ENCODE measurements at regions of chr14 and their contacts with region 1.

Region 1: DNA sequence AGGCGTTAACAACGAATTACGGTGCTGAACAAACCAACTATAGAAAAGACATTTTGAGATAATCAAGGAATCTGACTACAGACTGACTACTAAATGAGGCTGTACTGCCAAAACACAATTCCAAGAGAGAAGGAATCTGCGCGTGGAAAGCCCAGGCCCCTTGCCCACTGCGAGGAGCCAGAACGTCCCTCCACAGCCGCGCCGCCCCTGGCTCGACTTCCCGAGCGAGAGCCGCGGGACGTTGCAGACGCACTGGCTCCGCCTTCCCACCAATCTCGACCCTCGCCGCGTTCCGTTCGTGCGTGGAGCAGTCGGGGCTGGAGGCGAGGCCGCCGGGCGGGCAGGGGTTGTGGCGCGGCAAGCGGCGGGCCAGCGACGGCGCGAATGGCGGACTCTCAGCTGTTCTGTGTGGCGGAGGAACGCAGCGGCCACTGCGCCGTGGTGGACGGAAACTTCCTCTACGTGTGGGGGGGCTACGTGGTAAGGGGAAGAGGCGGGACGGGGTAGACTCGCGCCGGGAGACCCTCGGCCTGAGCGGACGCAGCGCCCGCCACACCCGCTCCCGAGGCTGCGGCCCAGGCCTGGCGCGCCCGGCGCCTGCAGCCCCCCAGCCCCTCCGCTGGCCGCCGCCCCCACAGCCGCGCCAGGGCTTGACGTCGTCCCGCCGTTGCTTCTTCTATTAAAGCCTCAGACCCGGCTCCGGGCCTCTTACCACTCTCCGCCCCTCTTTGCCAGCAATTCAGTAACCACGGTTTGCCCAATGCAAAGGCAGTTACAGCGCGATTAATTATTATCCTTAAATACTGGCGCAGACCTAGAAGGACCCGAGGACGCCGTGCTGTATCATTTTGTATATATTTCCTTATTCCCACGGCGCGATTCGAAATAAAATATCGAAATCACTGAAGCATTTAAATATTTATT is at the start of gene KLHDC1:
- DNase-seq: peak; percentile 85
- H3K4me3 ChIP-seq: peak within 1 kb of the TSS; percentile 48 to 91 (median 72)
- H3K27ac ChIP-seq: peak within 1 kb of the TSS; percentile 10
- H3K4me1 ChIP-seq: peaks cover 9% of the 10 kb centered on the region
- H3K27me3 ChIP-seq: no peaks in the 10 kb centered on the region
- CTCF ChIP-seq: no peak
- POLR2A ChIP-seq: peak; percentile 95
- total RNA-seq, gene KLHDC1: 1.2 and 1.6 TPM in 2 replicates

Region 2: GRCh38 chr14:49703965-49704364 is 10.9 kb after region 1 on chr14:
- CTCF ChIA-PET with region 1: no interaction called
- POLR2A ChIA-PET with region 1: interaction called, 10 read pairs
- dilution Hi-C with region 1: no loop called
- intact Hi-C with region 1: no loop called
- DNase-seq: no peak
- H3K4me3 ChIP-seq: no peak overlapping the region
- H3K27ac ChIP-seq: no peak overlapping the region
- H3K4me1 ChIP-seq: no peaks in the 10 kb centered on the region
- H3K27me3 ChIP-seq: no peaks in the 10 kb centered on the region
- CTCF ChIP-seq: no peak
- POLR2A ChIP-seq: no peak

Region 3: DNA sequence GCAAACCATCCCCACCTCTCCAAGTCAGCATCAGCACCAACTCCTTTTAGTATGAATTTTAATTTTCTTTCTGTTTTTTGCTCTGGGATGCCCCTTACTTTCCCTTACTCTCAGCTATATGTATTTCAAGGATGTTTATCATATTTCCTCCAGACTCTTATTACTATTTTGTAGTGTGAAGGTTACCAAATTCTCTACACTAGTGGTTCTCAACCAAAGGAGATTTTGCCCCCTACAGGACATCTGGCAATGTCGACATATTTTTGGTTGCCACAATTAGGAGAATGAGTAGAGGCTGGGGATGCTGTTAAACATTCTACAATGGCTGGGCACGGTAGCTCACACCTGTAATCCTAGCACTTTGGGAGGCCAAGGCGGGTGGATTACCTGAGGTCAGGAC is 567.4 kb after region 1 on chr14:
- CTCF ChIA-PET with region 1: no interaction called
- POLR2A ChIA-PET with region 1: no interaction called
- dilution Hi-C with region 1: no loop called
- intact Hi-C with region 1: no loop called
- DNase-seq: peak; percentile 37
- H3K4me3 ChIP-seq: no peak overlapping the region
- H3K27ac ChIP-seq: no peak overlapping the region
- H3K4me1 ChIP-seq: no peaks in the 10 kb centered on the region
- H3K27me3 ChIP-seq: no peaks in the 10 kb centered on the region
- CTCF ChIP-seq: peak in 1 of 2 donors; percentile 39
- POLR2A ChIP-seq: no peak

Region 4: GRCh38 chr14:50736932-50737419 is 1043.9 kb after region 1 on chr14:
- CTCF ChIA-PET with region 1: no interaction called
- POLR2A ChIA-PET with region 1: no interaction called
- dilution Hi-C with region 1: no loop called
- intact Hi-C with region 1: no loop called
- DNase-seq: no peak
- H3K4me3 ChIP-seq: no peak overlapping the region
- H3K27ac ChIP-seq: no peak overlapping the region
- H3K4me1 ChIP-seq: peaks cover 11% of the 10 kb centered on the region
- H3K27me3 ChIP-seq: no peaks in the 10 kb centered on the region
- CTCF ChIP-seq: no peak
- POLR2A ChIP-seq: no peak